H1 (cell line): ENCODE measurements at regions of chr10 and their contacts with region 1.

Region 1: GRCh38 chr10:80504158-80504811 is 33.4 kb upstream of the SH2D4B start:
- DNase-seq: no peak
- H3K4me3 ChIP-seq: no peak overlapping the region
- H3K27ac ChIP-seq: 0 out of 2 replicates have a peak overlapping the region, but pooled peaks have one; percentile 7
- H3K4me1 ChIP-seq: peaks cover 5 to 32% (median 15%) of the 10 kb centered on the region in 4 experiments
- H3K27me3 ChIP-seq: no peaks in the 10 kb centered on the region
- CTCF ChIP-seq: no peak
- EP300 ChIP-seq: no peak
- POLR2A ChIP-seq: no peak
- RAD21 ChIP-seq: no peak

Region 2: DNA sequence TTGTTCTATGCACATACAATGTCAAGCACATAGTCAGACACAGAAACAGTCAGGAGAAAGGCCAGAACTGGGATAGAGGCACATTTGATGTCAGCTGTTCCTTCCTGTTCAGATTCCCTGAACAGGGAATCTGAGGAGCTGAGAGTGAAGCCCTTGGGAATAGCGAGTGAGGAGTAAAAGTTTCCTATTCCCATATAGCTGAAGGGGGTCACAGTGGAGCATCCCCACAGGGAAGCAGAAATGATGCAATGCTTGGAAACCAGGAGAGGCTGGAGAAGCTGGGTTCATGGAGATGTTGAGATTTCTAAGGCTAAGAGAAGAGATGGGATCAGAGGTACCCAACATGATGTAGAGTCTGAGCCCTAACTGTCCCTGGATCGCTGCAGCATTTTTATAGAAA is 107.3 kb before region 1 on chr10:
- CTCF ChIA-PET with region 1: interaction called, 15 read pairs
- POLR2A ChIA-PET with region 1: no interaction called
- DNase-seq: no peak
- H3K4me3 ChIP-seq: no peak overlapping the region
- H3K27ac ChIP-seq: no peak overlapping the region
- H3K4me1 ChIP-seq: no peaks in the 10 kb centered on the region; a peak in 1 of 7 replicates
- H3K27me3 ChIP-seq: no peaks in the 10 kb centered on the region
- CTCF ChIP-seq: no peak
- EP300 ChIP-seq: no peak
- POLR2A ChIP-seq: no peak
- RAD21 ChIP-seq: no peak

Region 3: GRCh38 chr10:80421707-80422536 is 82.4 kb before region 1 on chr10:
- CTCF ChIA-PET with region 1: interaction called, 28 read pairs
- POLR2A ChIA-PET with region 1: no interaction called
- DNase-seq: no peak
- H3K4me3 ChIP-seq: no peak overlapping the region
- H3K27ac ChIP-seq: no peak overlapping the region
- H3K4me1 ChIP-seq: peaks cover 0 to 8% (median 2%) of the 10 kb centered on the region in 4 experiments; a peak in 3 of 7 replicates
- H3K27me3 ChIP-seq: 0 out of 7 replicates have a peak, but pooled peaks cover 0 to 3% (median 0%) of the 10 kb centered on the region in 4 experiments
- CTCF ChIP-seq: no peak
- EP300 ChIP-seq: no peak
- POLR2A ChIP-seq: no peak
- RAD21 ChIP-seq: no peak

Region 4: DNA sequence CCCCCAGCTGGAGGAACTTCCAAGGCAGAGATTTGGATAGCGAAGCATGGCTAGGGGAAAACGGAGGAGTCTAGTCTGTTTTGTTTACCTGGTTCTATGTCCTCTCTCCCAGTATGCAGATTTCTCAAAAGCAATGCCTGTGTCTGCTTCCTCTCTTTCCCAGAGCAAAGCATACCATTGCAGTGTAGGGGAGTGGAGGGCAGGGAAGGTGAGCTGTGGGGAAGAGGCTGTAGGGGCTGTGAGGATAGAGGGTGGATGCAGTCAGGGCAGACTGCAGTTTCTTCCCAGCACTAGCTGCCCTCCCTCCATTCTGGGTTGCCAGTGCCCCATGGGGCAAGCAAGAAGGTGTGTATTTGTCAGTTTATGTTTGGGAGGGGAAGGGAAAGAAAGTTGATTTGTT is 67.1 kb before region 1 on chr10:
- CTCF ChIA-PET with region 1: interaction called, 1,263 read pairs
- POLR2A ChIA-PET with region 1: no interaction called
- DNase-seq: no peak
- H3K4me3 ChIP-seq: no peak overlapping the region
- H3K27ac ChIP-seq: no peak overlapping the region
- H3K4me1 ChIP-seq: peaks cover 0 to 3% (median 1%) of the 10 kb centered on the region in 4 experiments; a peak in 4 of 7 replicates
- H3K27me3 ChIP-seq: no peaks in the 10 kb centered on the region
- CTCF ChIP-seq: no peak
- EP300 ChIP-seq: no peak
- POLR2A ChIP-seq: no peak
- RAD21 ChIP-seq: no peak

Region 5: GRCh38 chr10:80487791-80488538 is 16.3 kb before region 1 on chr10:
- CTCF ChIA-PET with region 1: interaction called, 66 read pairs
- POLR2A ChIA-PET with region 1: no interaction called
- DNase-seq: no peak
- H3K4me3 ChIP-seq: no peak overlapping the region
- H3K27ac ChIP-seq: no peak overlapping the region
- H3K4me1 ChIP-seq: peaks cover 11 to 20% (median 15%) of the 10 kb centered on the region in 4 experiments
- H3K27me3 ChIP-seq: no peaks in the 10 kb centered on the region
- CTCF ChIP-seq: no peak
- EP300 ChIP-seq: no peak
- POLR2A ChIP-seq: no peak
- RAD21 ChIP-seq: no peak

Region 6: GRCh38 chr10:80518807-80519360 is 14.6 kb after region 1 on chr10:
- CTCF ChIA-PET with region 1: interaction called, 33 read pairs
- POLR2A ChIA-PET with region 1: no interaction called
- DNase-seq: no peak
- H3K4me3 ChIP-seq: no peak overlapping the region
- H3K27ac ChIP-seq: no peak overlapping the region
- H3K4me1 ChIP-seq: peaks cover 0 to 2% (median 0%) of the 10 kb centered on the region in 4 experiments; a peak in 3 of 7 replicates
- H3K27me3 ChIP-seq: no peaks in the 10 kb centered on the region
- CTCF ChIP-seq: no peak
- EP300 ChIP-seq: no peak
- POLR2A ChIP-seq: no peak
- RAD21 ChIP-seq: no peak

Region 7: DNA sequence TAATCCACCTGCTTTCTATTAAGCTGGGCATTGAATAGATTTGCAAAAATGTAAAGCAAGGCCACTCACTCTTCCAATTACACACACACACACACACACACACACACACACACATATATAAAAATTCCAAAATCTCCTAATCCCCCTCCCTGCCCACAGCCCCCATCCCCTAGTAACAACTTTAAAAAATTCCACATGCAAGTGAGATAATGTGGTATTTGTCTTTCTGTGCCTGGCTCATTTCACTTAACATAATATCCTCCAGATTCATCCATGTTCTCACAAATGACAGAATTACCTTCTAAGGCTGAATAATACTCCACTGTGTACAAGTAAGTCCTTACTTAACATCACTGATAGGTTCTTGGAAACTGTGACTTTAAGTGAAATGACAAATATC is 57.7 kb after region 1 on chr10:
- CTCF ChIA-PET with region 1: no interaction called
- POLR2A ChIA-PET with region 1: no interaction called
- DNase-seq: no peak
- H3K4me3 ChIP-seq: no peak overlapping the region
- H3K27ac ChIP-seq: no peak overlapping the region
- H3K4me1 ChIP-seq: no peaks in the 10 kb centered on the region
- H3K27me3 ChIP-seq: no peaks in the 10 kb centered on the region
- CTCF ChIP-seq: no peak
- EP300 ChIP-seq: no peak
- POLR2A ChIP-seq: no peak
- RAD21 ChIP-seq: no peak